ENCODE measurements at regions of chr6 and their contacts with region 1.

Region 1: DNA sequence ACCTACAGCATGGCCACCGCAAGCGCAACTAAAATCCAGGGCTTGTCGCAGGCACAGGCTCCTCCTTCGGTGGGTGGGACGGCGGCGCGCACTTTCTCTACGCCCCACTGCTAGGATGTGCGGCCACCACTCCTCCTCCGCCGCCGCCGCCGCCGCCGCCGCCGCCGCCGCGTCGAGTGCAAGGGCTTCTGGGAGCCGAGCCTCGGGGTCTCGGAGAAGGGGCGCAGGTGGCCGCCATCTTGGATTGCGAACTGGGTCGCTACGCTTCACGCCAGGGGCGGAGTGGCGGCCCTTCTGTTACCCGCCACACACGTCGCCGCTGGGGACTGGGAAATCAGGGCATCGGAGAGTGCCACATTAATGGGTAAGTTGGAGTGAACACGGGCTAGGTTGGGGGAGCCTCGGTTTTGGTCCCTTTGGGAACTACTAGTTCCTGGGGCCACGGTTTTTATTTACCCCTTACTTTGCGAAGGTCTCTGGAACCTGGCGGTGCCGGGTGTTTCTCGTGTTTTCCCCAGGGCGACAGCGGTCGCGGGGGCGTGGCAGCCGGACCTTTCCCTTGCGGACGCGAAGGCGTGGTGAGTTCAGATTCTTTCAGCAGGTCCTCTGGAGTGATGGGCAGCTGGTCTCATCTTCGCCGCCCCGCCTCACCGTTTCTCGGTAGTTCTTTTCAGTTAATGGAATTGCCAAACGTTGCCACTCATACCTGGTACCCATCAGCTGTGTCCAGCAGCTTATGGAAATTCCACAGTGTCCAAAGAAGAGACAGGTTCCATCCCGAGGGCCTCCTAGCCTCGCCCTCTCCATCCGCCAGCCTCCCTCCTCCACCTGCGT is at the start of gene KPNA5:
- DNase-seq: peak; percentile 81 to 94 (median 91)
- ATAC-seq: peak; percentile 92
- H3K4me3 Mint-ChIP-seq: peak within 1 kb of the TSS; percentile 96 to 99 (median 98)
- H3K27ac Mint-ChIP-seq: peak within 1 kb of the TSS; percentile 95 to 100 (median 99)
- H3K4me1 Mint-ChIP-seq: peaks cover 17 to 66% (median 51%) of the 10 kb centered on the region in 4 donors
- H3K27me3 Mint-ChIP-seq: no peaks in the 10 kb centered on the region
- polyA plus RNA-seq, gene KPNA5: 15.9 to 16.9 (median 15.9) TPM

Region 2: GRCh38 chr6:116545661-116546060 is 135.5 kb before region 1 on chr6 and contains the start of gene TRAPPC3L:
- POLR2A ChIA-PET with region 1: no interaction called
- DNase-seq: no peak
- ATAC-seq: no peak
- H3K4me3 Mint-ChIP-seq: no peak within 1 kb of the TSS
- H3K27ac Mint-ChIP-seq: no peak within 1 kb of the TSS
- H3K4me1 Mint-ChIP-seq: no peaks in the 10 kb centered on the region
- H3K27me3 Mint-ChIP-seq: peaks cover 3 to 25% (median 8%) of the 10 kb centered on the region in 5 donors
- polyA plus RNA-seq, gene TRAPPC3L: not detected

Region 3: GRCh38 chr6:116570856-116571682 is 110.1 kb before region 1 on chr6 and contains the start of gene RWDD1:
- POLR2A ChIA-PET with region 1: interaction called, 26 read pairs
- DNase-seq: peak; percentile 92 to 99 (median 98)
- ATAC-seq: peak; percentile 87 to 93
- H3K4me3 Mint-ChIP-seq: peak within 1 kb of the TSS; percentile 93 to 99 (median 96)
- H3K27ac Mint-ChIP-seq: peak within 1 kb of the TSS; percentile 98 to 100 (median 100)
- H3K4me1 Mint-ChIP-seq: peaks cover 26 to 60% (median 50%) of the 10 kb centered on the region in 4 donors
- H3K27me3 Mint-ChIP-seq: no peaks in the 10 kb centered on the region
- polyA plus RNA-seq, gene RWDD1: 55.7 to 89.3 (median 69.7) TPM

Region 4: GRCh38 chr6:116667623-116668022 is 13.6 kb before region 1 on chr6:
- POLR2A ChIA-PET with region 1: interaction called, 14 read pairs
- DNase-seq: no peak
- ATAC-seq: no peak
- H3K4me3 Mint-ChIP-seq: peak overlapping the region; percentile 96 to 100 (median 98)
- H3K27ac Mint-ChIP-seq: peak overlapping the region in 9 of 10 donors; percentile 22 to 100 (median 99)
- H3K4me1 Mint-ChIP-seq: peaks cover 23 to 50% (median 39%) of the 10 kb centered on the region in 4 donors
- H3K27me3 Mint-ChIP-seq: peaks cover 0 to 6% (median 0%) of the 10 kb centered on the region in 5 donors

Region 5: GRCh38 chr6:116741571-116741970 is 60.4 kb after region 1 on chr6:
- POLR2A ChIA-PET with region 1: no interaction called
- DNase-seq: no peak
- ATAC-seq: no peak
- H3K4me3 Mint-ChIP-seq: no peak overlapping the region
- H3K27ac Mint-ChIP-seq: no peak overlapping the region
- H3K4me1 Mint-ChIP-seq: no peaks in the 10 kb centered on the region
- H3K27me3 Mint-ChIP-seq: no peaks in the 10 kb centered on the region

Region 6: GRCh38 chr6:116797585-116797984 is 116.4 kb after region 1 on chr6:
- POLR2A ChIA-PET with region 1: no interaction called
- DNase-seq: no peak
- ATAC-seq: no peak
- H3K4me3 Mint-ChIP-seq: no peak overlapping the region
- H3K27ac Mint-ChIP-seq: no peak overlapping the region
- H3K4me1 Mint-ChIP-seq: no peaks in the 10 kb centered on the region
- H3K27me3 Mint-ChIP-seq: peaks cover 6 to 31% (median 19%) of the 10 kb centered on the region in 5 donors

Measured in naive thymus-derived CD8-positive, alpha-beta T cell (primary cell).